Right ventricle myocardium inferior (tissue), 1 donor: ENCODE measurements at regions of chr1 and their contacts with region 1.

Region 1: GRCh38 chr1:155940531-155940992 is 876 bp upstream of the RXFP4 start:
- DNase-seq: no peak
- ATAC-seq: peak; percentile 68

Region 2: GRCh38 chr1:155978325-155978972 is 37.9 kb after region 1 on chr1 and contains the start of gene ARHGEF2:
- intact Hi-C with region 1: loop called (anchors 5 kb)
- DNase-seq: peak; percentile 94
- ATAC-seq: peak; percentile 71
- total RNA-seq, gene ARHGEF2: 61.8 TPM

Region 3: GRCh38 chr1:156096640-156097391 is 156.3 kb after region 1 on chr1:
- intact Hi-C with region 1: no loop called
- DNase-seq: peak; percentile 95
- ATAC-seq: peak; percentile 96